HEK293T (cell line): ENCODE measurements at regions of chr16 and their contacts with region 1.

Region 1: DNA sequence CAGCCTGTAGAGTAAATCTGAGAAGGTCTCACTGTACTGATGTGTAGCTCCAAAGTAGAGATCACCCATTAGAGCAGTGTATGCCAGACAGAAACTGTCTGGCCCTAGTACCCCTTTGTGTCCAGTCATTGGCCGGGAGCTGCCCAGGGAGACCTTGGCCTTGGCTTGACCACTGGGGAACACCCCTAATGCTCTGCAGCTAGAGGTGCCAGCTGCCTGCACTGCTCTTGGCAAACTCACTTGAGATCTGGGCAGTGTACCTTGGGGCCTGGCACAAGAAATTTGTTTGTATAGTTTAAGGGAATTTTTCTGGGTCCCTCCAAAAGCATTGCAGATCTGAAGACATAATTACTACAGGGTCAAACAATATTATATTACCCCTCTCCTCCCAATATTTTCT is 78.7 kb upstream of the MPHOSPH6 start:
- DNase-seq: no peak

Region 2: DNA sequence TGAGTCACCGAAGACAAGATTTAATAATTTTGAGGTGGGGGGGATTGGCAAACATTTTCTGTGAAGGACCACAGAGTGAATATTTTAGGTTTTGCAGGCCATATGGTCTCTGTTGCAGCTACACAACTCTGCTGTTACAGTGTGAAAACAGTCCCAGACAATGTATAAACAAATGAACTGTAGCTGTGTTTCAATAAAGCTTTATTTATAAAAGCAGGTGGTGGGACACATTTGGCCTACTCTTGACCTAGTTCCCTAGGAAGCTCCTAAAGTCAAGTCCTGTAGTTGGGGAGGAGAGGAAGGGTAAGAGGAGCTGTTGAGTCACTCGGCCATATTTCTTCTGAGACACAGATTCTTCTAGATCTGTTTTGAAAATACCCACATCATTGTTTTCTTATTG is 329.7 kb before region 1 on chr16:
- CTCF ChIA-PET with region 1: interaction called, 12 read pairs
- POLR2A ChIA-PET with region 1: no interaction called
- DNase-seq: no peak